ENCODE measurements at regions of chr12 and their contacts with region 1.

Region 1: DNA sequence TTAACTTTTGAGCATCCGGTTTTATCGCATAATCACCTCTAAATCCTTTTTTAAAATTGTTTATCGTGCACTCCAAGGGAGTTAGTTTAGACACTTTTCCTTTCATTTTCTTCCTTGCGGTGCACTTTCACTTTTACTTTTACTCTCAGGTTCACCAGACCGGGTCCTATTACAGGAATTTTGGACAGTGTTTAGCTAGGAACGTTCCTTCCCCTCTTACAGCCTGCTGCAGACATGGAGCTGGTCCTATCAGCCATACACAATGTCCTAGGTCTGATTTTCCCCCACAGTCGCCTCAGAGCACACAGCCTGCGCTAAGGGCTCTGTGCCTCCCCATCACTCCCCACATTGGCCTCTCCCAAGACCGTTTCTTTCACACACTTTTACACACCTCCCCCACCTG is 103.9 kb downstream of the ALG10 start:
- DNase-seq: no peak
- H3K4me3 Mint-ChIP-seq: peak overlapping the region; percentile 44
- H3K27ac Mint-ChIP-seq: no peak overlapping the region
- H3K4me1 Mint-ChIP-seq: peaks cover 6% of the 10 kb centered on the region
- H3K27me3 Mint-ChIP-seq: peaks cover 2% of the 10 kb centered on the region

Region 2: DNA sequence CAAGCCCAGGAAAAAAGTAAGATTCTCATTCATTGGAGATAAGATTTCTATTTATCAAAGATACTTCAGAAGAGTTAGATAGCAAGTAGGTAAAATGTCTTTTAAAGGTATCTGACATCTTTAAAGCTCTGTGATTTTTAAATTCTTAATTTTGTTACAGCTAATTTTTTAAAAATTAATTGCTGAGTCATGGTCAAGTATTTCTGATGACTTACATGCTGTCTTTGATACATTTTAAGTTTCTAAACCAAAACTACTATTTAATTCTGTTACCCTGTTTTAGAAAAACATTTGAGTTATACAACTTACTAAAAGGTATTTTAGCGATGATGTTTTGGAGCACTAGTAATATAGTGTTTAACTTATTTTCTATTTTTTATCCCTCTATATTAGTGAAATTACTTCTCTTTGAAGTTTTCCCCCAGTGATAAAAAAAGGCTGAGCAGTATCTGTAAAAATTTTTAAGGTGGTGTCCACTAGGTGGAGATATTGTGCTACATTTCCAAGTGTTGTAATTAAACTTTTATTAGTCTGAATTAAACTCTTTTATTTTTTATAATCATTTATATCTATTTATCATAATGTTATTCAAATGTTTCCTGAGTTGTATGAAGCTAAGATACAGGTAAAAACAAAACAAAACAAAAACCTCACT is 92.5 kb before region 1 on chr12:
- intact Hi-C with region 1: loop called (anchors 10 kb)
- DNase-seq: no peak
- H3K4me3 Mint-ChIP-seq: no peak overlapping the region
- H3K27ac Mint-ChIP-seq: no peak overlapping the region
- H3K4me1 Mint-ChIP-seq: peaks cover 4% of the 10 kb centered on the region
- H3K27me3 Mint-ChIP-seq: no peaks in the 10 kb centered on the region

Region 3: GRCh38 chr12:34054938-34055337 is 71.3 kb before region 1 on chr12:
- intact Hi-C with region 1: no loop called
- DNase-seq: no peak
- H3K4me3 Mint-ChIP-seq: no peak overlapping the region
- H3K27ac Mint-ChIP-seq: no peak overlapping the region
- H3K4me1 Mint-ChIP-seq: peaks cover 3% of the 10 kb centered on the region
- H3K27me3 Mint-ChIP-seq: no peaks in the 10 kb centered on the region

Region 4: DNA sequence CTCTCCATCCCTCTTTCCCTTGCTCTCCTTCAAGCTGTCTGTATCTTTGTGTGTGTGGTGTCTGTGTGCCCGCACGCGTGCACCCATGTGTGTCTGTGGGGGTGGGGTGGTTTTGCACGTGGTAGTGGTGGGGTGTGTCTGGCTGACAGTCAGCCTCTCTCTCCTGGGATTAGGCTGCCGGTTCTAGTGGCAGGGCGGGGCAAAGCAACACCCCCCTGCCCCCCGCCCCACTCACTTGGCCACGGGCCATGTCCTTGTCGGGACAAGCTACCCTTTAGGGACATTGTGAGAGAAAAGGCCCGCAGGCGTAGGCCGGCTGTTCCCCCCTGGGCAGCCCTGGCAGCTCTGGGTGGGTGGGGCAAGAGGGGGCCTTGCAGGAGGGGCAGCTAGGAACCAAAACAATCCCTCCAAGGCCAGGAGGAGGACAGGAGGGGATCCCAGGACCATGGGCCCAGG is 78.6 kb after region 1 on chr12:
- intact Hi-C with region 1: no loop called
- DNase-seq: no peak
- H3K4me3 Mint-ChIP-seq: no peak overlapping the region
- H3K27ac Mint-ChIP-seq: no peak overlapping the region
- H3K4me1 Mint-ChIP-seq: no peaks in the 10 kb centered on the region
- H3K27me3 Mint-ChIP-seq: no peaks in the 10 kb centered on the region

Region 5: GRCh38 chr12:34275129-34275528 is 148.9 kb after region 1 on chr12:
- intact Hi-C with region 1: no loop called
- DNase-seq: no peak
- H3K4me3 Mint-ChIP-seq: no peak overlapping the region
- H3K27ac Mint-ChIP-seq: no peak overlapping the region
- H3K4me1 Mint-ChIP-seq: no peaks in the 10 kb centered on the region
- H3K27me3 Mint-ChIP-seq: no peaks in the 10 kb centered on the region